Astrocyte of the cerebellum (primary cell): ENCODE measurements at regions of chr2 and their contacts with region 1.

Region 1: DNA sequence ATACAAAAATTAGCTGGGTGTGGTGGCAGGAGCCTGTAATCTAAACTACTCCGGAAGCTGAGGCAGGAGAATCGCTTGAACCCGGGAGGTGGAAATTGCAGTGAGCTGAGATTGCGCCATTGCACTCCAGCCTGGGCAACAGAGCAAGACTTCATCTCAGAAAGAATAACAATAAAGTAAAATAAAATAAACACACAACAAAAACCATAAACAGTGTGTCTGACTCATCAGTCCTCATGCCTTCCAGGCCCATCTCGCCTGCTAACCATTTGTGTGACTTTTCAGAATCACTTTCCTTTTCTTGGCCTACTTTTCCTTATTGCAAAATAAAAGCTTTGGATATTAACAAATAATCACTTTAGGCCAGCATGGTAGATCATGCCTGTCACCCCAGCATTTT is 42.0 kb upstream of the ASXL2 start:
- DNase-seq: no peak
- H3K4me3 ChIP-seq: no peak overlapping the region
- CTCF ChIP-seq: no peak

Region 2: DNA sequence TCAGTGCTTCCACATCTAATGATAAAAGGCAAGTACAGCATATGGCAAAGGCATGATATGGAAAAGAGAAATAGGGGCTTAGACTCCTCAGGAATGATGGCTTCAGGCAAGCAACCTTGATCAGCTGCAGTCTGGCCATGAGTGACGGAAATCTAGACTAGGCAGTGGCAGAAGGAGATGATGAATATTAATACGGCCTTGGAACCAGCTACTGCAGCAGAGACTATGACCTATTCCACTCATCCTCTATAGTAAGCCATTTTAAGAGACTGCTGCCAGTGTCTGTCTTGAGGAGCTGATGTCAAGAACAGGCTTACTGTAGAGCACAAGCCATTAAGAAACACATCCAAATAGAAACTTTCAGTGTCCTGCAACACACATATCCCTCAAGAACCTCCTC is 65.7 kb before region 1 on chr2:
- in situ Hi-C with region 1: no loop called
- DNase-seq: no peak
- H3K4me3 ChIP-seq: no peak overlapping the region
- CTCF ChIP-seq: no peak

Region 3: DNA sequence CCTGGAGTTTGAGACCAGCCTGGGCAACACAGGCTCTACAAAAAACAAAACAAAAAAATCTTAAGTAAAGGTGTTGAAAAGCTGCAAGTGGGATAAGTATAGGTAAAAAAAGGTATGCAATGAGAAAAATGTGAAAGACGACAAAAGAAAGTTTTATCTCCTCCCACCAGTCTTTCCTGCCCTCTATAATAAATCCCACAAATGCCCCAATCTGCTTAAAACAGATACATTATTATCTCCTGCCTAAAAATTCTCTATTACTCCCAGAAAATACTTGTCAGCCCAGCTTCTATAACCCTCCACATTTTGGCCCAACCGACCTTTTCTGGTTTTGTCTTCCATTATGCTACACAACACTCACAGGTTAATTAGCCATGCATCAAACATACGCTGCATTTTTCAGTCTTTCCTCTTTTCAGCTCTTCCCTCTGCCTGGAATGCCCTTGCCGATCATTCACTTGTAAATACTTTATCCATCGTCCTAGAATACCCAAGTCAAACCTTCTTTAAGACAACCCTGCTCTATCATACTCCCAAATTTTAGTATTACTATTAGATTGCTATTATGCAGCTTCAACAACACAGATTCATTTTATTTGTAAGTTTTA is 52.8 kb before region 1 on chr2:
- in situ Hi-C with region 1: loop called (anchors 10 kb)
- DNase-seq: no peak
- H3K4me3 ChIP-seq: no peak overlapping the region
- CTCF ChIP-seq: no peak